Activated CD8-positive, alpha-beta memory T cell treated with anti-CD3 and anti-CD28 coated beads, Interleukin-2, amount 10 ng/mL, durations not matched to agents 7 days and 5 days (primary cell): ENCODE measurements at regions of chr19 and their contacts with region 1.

Region 1: GRCh38 chr19:37906869-37907734 is at the start of gene SIPA1L3:
- DNase-seq: peak; percentile 96
- ATAC-seq: peak; percentile 98
- H3K4me3 Mint-ChIP-seq: peak within 1 kb of the TSS; percentile 75
- H3K27ac Mint-ChIP-seq: peak within 1 kb of the TSS; percentile 82
- H3K4me1 Mint-ChIP-seq: peaks cover 15% of the 10 kb centered on the region
- H3K27me3 Mint-ChIP-seq: no peaks in the 10 kb centered on the region
- total RNA-seq, gene SIPA1L3: 16.6 to 21.6 TPM

Region 2: GRCh38 chr19:37874784-37875183 is 32.3 kb before region 1 on chr19:
- CTCF ChIA-PET with region 1: no interaction called
- DNase-seq: no peak
- ATAC-seq: no peak
- H3K4me3 Mint-ChIP-seq: no peak overlapping the region
- H3K27ac Mint-ChIP-seq: no peak overlapping the region
- H3K4me1 Mint-ChIP-seq: no peaks in the 10 kb centered on the region
- H3K27me3 Mint-ChIP-seq: no peaks in the 10 kb centered on the region

Region 3: GRCh38 chr19:37920591-37921450 is 13.7 kb after region 1 on chr19:
- CTCF ChIA-PET with region 1: interaction called, 10 read pairs
- DNase-seq: no peak
- ATAC-seq: no peak
- H3K4me3 Mint-ChIP-seq: no peak overlapping the region
- H3K27ac Mint-ChIP-seq: no peak overlapping the region
- H3K4me1 Mint-ChIP-seq: peaks cover 7% of the 10 kb centered on the region
- H3K27me3 Mint-ChIP-seq: no peaks in the 10 kb centered on the region

Region 4: GRCh38 chr19:38049105-38049649 is 142.1 kb after region 1 on chr19:
- CTCF ChIA-PET with region 1: interaction called, 18 read pairs
- DNase-seq: peak; percentile 74
- ATAC-seq: peak; percentile 96
- H3K4me3 Mint-ChIP-seq: peak overlapping the region; percentile 72
- H3K27ac Mint-ChIP-seq: peak overlapping the region; percentile 95
- H3K4me1 Mint-ChIP-seq: peaks cover 28% of the 10 kb centered on the region
- H3K27me3 Mint-ChIP-seq: no peaks in the 10 kb centered on the region

Region 5: DNA sequence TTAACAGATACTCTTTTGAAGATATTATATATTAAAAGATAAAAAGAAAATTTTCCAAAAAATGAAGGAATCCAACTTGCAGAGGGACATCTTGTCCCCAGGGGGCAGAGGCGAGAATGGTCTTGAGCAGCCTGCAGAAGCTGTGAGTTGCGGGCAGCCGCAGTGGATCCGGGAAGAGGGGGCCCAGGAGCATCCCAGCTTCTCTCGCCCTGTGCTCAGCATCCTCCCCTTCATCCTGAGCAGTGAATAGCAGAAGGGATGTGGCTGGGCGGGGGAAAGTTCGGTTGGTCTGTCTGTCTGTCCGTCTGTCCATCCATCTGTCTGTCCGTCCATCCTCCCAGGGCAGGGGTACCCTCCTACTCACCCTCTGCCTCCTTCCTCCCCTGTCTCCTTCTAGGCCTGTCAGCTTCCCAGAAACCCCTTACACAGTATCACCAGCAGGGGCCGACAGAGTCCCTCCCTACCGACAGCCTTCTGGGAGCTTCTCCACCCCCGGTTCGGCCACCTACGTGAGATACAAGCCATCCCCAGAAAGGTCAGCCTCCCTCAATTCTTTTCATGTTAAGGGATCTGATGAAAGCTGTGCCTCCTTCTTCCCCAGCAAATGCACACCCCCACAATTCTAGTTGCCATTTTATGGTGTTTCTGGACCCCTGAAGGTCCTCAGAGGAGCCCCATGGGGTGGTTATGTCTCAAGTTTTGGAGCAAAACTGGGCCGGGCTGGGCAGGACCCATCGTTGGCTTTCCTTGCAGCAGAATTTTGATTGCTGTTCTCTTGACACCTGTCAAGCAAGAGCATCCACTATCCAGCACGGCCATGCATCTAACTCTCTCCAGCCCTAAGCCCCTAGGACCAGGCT is 235.3 kb after region 1 on chr19:
- CTCF ChIA-PET with region 1: interaction called, 29 read pairs
- DNase-seq: peak; percentile 68
- ATAC-seq: peak; percentile 71
- H3K4me3 Mint-ChIP-seq: no peak overlapping the region
- H3K27ac Mint-ChIP-seq: no peak overlapping the region
- H3K4me1 Mint-ChIP-seq: peaks cover 3% of the 10 kb centered on the region
- H3K27me3 Mint-ChIP-seq: no peaks in the 10 kb centered on the region

Region 6: DNA sequence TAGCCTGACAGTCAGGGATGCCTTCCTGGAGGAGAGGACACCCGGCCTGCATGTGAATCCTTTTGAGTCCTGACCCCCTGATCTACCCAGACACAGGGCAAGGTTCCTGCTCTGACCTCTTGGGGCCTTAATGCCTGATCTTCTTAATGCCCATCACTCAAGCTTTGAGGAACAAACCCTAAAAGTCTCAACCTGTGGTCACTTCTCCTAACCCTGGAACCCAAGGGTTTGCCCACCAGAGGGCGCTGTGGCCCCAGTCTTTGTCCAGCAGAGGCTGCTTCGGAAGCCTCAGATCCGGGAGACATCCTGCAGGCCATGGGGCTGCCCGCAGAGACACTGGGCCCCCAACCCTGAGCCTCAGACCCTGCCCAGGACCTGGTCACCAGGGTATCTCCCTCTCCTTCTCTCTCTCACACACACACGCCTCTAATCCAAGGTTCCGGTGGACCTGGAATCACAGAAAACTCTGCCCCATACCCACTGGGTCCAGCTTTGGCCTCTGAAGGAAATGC is 326.7 kb after region 1 on chr19:
- CTCF ChIA-PET with region 1: interaction called, 20 read pairs
- DNase-seq: peak; percentile 86
- ATAC-seq: peak; percentile 59
- H3K4me3 Mint-ChIP-seq: no peak overlapping the region
- H3K27ac Mint-ChIP-seq: no peak overlapping the region
- H3K4me1 Mint-ChIP-seq: peaks cover 5% of the 10 kb centered on the region
- H3K27me3 Mint-ChIP-seq: peaks cover 29% of the 10 kb centered on the region

Region 7: GRCh38 chr19:38335949-38336637 is 429.0 kb after region 1 on chr19:
- CTCF ChIA-PET with region 1: interaction called, 15 read pairs
- DNase-seq: peak; percentile 98
- ATAC-seq: peak; percentile 80
- H3K4me3 Mint-ChIP-seq: peak overlapping the region; percentile 86
- H3K27ac Mint-ChIP-seq: peak overlapping the region; percentile 99
- H3K4me1 Mint-ChIP-seq: peaks cover 12% of the 10 kb centered on the region
- H3K27me3 Mint-ChIP-seq: no peaks in the 10 kb centered on the region